ENCODE measurements at regions of chr20 and their contacts with region 1.

Region 1: DNA sequence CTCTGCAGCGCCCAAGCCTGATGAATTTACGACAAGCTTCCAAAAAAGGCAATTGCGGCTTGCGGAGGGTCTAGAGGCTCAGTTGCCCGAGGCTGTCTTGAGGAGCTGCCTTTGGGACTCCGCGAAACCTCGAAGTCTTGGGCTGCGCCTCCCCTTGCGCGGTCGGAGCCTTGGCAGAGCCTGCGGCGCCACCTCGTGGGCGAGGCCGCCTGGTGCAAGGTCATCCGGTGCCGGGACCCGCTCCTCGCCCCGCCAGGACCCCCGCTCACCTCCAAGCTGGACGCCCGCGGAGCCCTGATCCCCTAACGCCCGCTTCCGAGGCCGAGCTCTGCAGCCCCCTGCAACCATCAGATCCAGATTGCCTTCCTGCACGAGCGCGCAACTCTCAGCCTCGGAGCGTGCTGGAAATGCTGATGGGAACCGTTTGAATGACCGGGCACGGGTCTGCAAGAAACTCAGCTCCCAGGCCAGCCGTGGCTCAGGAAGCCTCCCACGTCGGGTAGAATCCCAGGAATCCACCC is 14.9 kb upstream of the FAM210B start:
- DNase-seq: no peak
- H3K4me3 Mint-ChIP-seq: no peak overlapping the region
- H3K27ac Mint-ChIP-seq: no peak overlapping the region
- H3K4me1 Mint-ChIP-seq: no peaks in the 10 kb centered on the region
- H3K27me3 Mint-ChIP-seq: peaks cover 25% of the 10 kb centered on the region
- CTCF ChIP-seq: peak; percentile 73

Region 2: DNA sequence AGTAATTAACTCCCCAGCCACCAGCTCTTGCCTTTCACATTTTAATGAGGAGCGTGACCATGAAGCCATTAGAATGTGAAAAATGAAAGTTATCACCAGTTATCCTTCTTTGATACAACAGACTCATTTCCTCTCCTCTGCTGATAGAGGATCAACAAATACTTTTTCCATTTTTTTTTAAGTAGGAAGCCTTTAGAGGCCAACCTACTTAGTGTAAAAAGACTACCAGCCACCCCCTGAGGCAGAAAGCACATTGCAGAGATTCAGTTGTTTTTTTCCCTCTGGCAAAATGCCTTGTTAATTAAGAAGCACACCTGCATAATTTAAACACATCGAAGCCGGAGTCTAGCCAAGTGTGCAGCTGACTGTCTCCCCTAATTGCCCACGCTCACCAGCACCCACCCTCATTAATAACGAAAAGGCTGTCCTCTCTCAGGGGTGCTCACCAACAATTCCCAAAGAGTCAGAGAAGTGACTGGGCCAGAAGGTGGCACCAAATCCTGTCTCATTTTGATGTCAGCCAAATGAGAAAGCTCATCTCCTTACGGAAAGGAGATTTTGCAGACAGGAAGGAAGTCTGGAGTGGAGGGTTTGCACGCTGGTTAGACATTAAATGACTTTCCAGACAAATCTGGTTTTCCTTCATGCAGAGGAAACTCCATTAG is 156.3 kb before region 1 on chr20:
- CTCF ChIA-PET with region 1: interaction called, 9 read pairs
- POLR2A ChIA-PET with region 1: no interaction called
- intact Hi-C with region 1: loop called (anchors 5 kb)
- DNase-seq: peak; percentile 62
- H3K4me3 Mint-ChIP-seq: no peak overlapping the region
- H3K27ac Mint-ChIP-seq: no peak overlapping the region
- H3K4me1 Mint-ChIP-seq: peaks cover 6% of the 10 kb centered on the region
- H3K27me3 Mint-ChIP-seq: no peaks in the 10 kb centered on the region
- CTCF ChIP-seq: peak; percentile 48

Region 3: DNA sequence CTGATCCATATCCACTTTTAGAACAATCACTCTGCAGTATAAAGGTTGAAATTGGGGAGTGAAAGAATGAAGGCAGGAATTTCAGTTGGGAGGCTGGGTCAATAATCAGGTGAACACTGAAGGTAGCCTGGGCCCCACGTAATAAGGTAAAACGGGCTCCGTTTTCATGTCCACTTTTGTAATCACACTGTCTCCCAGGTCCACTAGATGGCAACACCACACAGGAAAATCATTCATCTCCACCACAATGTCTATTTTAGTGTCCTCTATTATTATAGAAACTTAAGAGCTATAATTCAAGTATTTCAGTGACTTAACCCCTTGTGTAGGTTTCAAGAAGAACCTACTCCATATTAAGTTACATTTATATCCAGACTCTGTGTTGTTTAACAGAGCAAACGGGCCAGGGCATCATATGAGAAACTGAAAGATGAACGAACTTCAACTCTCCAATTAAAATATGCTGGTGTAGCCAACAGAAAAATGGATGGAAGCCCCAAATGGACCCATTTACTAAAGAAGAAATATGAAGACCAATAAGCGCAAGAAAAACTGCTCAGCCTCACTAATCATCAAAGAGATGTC is 141.3 kb before region 1 on chr20:
- CTCF ChIA-PET with region 1: interaction called, 56 read pairs
- POLR2A ChIA-PET with region 1: no interaction called
- intact Hi-C with region 1: loop called (anchors 1 kb)
- DNase-seq: peak; percentile 63
- H3K4me3 Mint-ChIP-seq: no peak overlapping the region
- H3K27ac Mint-ChIP-seq: no peak overlapping the region
- H3K4me1 Mint-ChIP-seq: no peaks in the 10 kb centered on the region
- H3K27me3 Mint-ChIP-seq: no peaks in the 10 kb centered on the region
- CTCF ChIP-seq: peak; percentile 73

Region 4: GRCh38 chr20:56257604-56258003 is 86.3 kb before region 1 on chr20:
- CTCF ChIA-PET with region 1: interaction called, 35 read pairs
- POLR2A ChIA-PET with region 1: interaction called, 3 read pairs
- intact Hi-C with region 1: no loop called
- DNase-seq: no peak
- H3K4me3 Mint-ChIP-seq: no peak overlapping the region
- H3K27ac Mint-ChIP-seq: no peak overlapping the region
- H3K4me1 Mint-ChIP-seq: peaks cover 7% of the 10 kb centered on the region
- H3K27me3 Mint-ChIP-seq: peaks cover 17% of the 10 kb centered on the region
- CTCF ChIP-seq: no peak

Region 5: DNA sequence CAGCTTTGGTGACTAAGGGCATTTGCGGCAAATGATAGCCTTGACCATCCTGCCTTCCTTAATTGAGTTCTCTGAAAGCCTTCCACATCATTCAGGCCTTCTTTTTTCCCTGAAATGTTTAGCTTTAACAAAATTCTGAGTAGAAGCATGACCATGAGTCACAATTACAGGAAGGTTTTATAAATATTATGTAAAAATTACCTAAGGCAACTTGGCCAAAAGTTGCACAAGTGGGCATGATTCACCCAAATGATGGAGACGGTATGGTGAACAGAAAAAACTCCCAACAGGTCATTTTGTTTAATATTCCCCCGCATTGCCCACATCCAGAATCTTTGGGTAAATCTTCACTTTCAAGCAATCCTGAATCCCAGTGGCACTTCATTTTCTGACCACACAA is 58.4 kb before region 1 on chr20:
- CTCF ChIA-PET with region 1: interaction called, 11 read pairs
- POLR2A ChIA-PET with region 1: interaction called, 3 read pairs
- intact Hi-C with region 1: no loop called
- DNase-seq: peak; percentile 84
- H3K4me3 Mint-ChIP-seq: no peak overlapping the region
- H3K27ac Mint-ChIP-seq: peak overlapping the region; percentile 79
- H3K4me1 Mint-ChIP-seq: peaks cover 24% of the 10 kb centered on the region
- H3K27me3 Mint-ChIP-seq: no peaks in the 10 kb centered on the region
- CTCF ChIP-seq: no peak

Region 6: DNA sequence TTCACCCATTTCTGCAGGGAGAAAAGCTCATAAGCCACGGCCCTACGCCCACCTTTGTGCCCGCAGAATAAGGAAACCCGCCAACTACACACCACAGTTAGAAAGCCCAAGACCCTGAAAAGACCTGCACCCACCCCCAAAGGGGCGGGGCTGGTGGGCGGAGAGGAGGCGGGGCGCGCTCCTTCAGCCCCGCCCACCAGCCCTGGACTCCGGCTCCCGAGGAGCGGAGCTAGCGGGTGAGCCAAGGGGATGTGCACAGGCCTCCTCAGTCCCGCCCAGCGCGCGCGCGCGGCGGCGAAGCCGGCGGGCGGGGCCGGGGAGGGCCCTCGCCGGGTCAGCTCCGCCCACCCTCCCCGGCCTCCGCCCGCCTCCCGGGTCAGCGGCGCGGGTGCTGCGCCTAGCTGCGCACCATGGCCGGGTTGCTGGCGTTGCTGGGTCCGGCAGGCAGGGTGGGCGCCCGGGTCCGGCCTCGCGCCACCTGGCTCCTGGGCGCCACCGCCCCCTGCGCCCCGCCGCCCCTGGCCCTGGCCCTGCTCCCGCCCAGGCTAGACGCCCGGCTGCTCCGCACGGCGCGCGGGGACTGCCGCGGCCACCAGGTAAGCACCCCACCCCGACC is 14.8 kb after region 1 on chr20 and contains the start of gene FAM210B:
- CTCF ChIA-PET with region 1: interaction called, 44 read pairs
- POLR2A ChIA-PET with region 1: interaction called, 3 read pairs
- intact Hi-C with region 1: no loop called
- DNase-seq: peak; percentile 90
- H3K4me3 Mint-ChIP-seq: peak within 1 kb of the TSS; percentile 84
- H3K27ac Mint-ChIP-seq: peak within 1 kb of the TSS; percentile 30
- H3K4me1 Mint-ChIP-seq: peaks cover 11% of the 10 kb centered on the region
- H3K27me3 Mint-ChIP-seq: no peaks in the 10 kb centered on the region
- CTCF ChIP-seq: no peak
- total RNA-seq, gene FAM210B: 37.7 and 38.2 TPM in 2 replicates

Region 7: DNA sequence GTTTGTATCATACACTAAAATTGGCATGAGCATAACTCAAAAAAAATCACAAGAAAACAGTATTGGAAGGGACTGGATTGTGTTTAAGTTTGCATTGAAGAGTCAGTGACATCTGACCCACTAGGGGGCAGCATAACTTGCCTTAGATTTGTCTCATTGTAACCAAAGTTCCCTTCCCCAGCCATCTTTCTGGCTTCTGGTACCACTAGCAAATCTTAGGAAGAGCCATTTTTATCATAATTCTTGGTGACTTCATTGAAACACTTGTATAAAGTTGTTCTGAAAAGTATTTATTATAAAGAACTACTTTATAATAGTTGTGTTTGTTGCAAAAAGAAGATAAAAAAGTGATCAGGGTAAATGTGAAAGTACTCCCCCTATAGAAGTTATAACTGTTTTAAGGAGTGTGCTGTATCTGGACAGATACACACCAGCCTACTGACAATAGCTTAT is 56.2 kb after region 1 on chr20:
- CTCF ChIA-PET with region 1: no interaction called
- POLR2A ChIA-PET with region 1: no interaction called
- intact Hi-C with region 1: no loop called
- DNase-seq: peak; percentile 70
- H3K4me3 Mint-ChIP-seq: no peak overlapping the region
- H3K27ac Mint-ChIP-seq: no peak overlapping the region
- H3K4me1 Mint-ChIP-seq: no peaks in the 10 kb centered on the region
- H3K27me3 Mint-ChIP-seq: no peaks in the 10 kb centered on the region
- CTCF ChIP-seq: peak; percentile 60

Measured in MCF 10A (cell line).